ENCODE measurements at regions of chr7 and their contacts with region 1.

Region 1: GRCh38 chr7:142438235-142438922 is 180.5 kb upstream of the PRSS58 start:
- DNase-seq: no peak
- H3K4me3 ChIP-seq: no peak overlapping the region
- H3K27me3 ChIP-seq: no peaks in the 10 kb centered on the region
- CTCF ChIP-seq: peak; percentile 68

Region 2: GRCh38 chr7:142420559-142421362 is 17.6 kb before region 1 on chr7:
- CTCF ChIA-PET with region 1: interaction called, 10 read pairs
- POLR2A ChIA-PET with region 1: interaction called, 3 read pairs
- DNase-seq: no peak
- H3K4me3 ChIP-seq: no peak overlapping the region
- H3K27me3 ChIP-seq: peaks cover 4% of the 10 kb centered on the region; the same call in 1 of the 2 replicates
- CTCF ChIP-seq: peak; percentile 69

Region 3: GRCh38 chr7:142485617-142486226 is 47.3 kb after region 1 on chr7:
- CTCF ChIA-PET with region 1: interaction called, 32 read pairs
- POLR2A ChIA-PET with region 1: no interaction called
- DNase-seq: no peak
- H3K4me3 ChIP-seq: no peak overlapping the region
- H3K27me3 ChIP-seq: peaks cover 6% of the 10 kb centered on the region; the same call in 1 of the 2 replicates
- CTCF ChIP-seq: peak; percentile 66